Activated CD4-positive, alpha-beta memory T cell treated with anti-CD3 and anti-CD28 coated beads for 36 hours (primary cell): ENCODE measurements at regions of chr21 and their contacts with region 1.

Region 1: DNA sequence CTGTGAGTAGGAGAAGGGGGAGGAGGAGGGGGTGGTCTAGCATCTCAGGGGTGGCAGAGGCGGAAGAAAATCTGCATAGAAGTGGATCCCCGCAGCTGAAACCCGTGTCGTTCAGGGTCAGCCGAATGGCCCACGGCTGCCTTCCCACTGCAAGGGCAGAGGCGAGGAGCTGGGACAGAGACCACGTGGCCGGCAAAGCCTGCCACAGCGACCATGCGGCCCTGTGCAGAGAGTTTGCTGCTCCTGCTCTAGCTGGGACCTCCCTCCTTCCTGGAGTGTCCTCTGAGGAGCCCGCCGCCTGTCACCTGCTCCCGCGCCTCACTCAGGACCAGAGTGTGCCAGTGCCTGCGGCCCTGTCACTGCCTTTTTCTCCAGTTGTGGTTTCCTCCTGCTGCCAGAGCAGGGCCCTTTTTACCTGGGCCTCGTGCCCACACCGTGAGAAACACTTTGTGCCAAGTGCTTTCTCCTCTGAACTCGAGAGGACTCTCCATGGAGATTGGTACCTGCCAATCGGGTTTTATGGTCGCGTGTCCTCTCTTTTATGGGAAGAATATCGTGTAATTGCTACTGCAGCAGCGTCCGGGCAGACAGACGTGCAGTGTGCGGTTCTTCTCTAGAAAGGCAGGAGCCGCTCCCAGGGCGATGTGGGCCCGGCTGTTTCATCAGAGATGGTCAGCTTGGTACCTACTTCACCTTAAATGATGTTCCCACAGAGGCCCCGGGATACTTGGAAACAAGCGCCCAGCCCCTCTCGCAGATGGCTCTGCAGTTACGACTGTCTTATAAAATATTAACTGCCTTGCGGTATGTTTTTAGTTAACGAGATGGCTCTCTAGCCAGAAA is 5.3 kb upstream of the TRPM2 start:
- DNase-seq: no peak
- H3K4me3 Mint-ChIP-seq: no peak overlapping the region
- H3K27ac Mint-ChIP-seq: no peak overlapping the region
- H3K4me1 Mint-ChIP-seq: peaks cover 10% of the 10 kb centered on the region
- H3K27me3 Mint-ChIP-seq: peaks cover 13% of the 10 kb centered on the region

Region 2: GRCh38 chr21:44326716-44327602 is 21.2 kb before region 1 on chr21:
- CTCF ChIA-PET with region 1: no interaction called
- POLR2A ChIA-PET with region 1: no interaction called
- intact Hi-C with region 1: loop called (anchors 2 kb)
- DNase-seq: no peak
- H3K4me3 Mint-ChIP-seq: no peak overlapping the region
- H3K27ac Mint-ChIP-seq: no peak overlapping the region
- H3K4me1 Mint-ChIP-seq: no peaks in the 10 kb centered on the region
- H3K27me3 Mint-ChIP-seq: no peaks in the 10 kb centered on the region